Common myeloid progenitor, CD34-positive (primary cell): ENCODE measurements at regions of chr16 and their contacts with region 1.

Region 1: DNA sequence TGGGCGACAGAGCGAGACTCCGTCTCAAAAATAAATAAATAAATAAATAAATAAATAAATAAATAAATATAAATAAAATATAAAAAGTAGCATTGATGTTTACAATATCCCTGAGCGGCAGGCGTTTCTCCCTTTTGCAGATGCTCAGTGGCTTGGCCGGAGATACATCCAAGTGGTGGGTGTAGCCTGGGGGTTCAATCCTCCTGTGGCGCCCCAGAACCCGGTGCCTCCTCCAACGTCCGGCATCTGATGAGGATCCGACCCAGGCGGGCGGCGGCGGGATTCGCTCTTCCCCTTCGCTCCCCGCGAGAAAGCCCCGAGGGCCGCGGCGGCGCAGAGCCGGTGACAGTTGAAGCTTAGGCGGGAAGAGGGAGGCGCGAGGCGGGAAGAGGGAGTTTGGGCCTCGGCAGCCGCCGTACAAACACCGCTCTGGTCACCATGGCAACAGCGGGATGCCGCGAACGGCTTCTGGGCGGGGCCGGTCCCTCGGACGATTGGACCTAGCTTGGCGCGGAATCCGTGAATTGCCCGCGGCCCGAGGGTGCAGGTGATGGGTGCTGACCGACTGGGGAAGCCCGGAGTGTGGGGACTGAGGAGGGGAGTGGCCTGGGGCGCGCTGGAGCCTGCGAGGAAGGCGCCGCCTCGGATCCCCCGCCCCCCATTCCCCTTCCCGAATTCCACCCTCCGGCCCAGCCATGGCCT is 12.7 kb upstream of the ALDOA start:
- DNase-seq: peak; percentile 85 to 88 (median 86)
- H3K4me3 ChIP-seq: peak overlapping the region; percentile 62 to 88 (median 83)
- H3K27ac ChIP-seq: peak overlapping the region in 1 of 2 experiments; percentile 80
- H3K4me1 ChIP-seq: peaks cover 0 to 22% (median 12%) of the 10 kb centered on the region in 4 experiments
- H3K27me3 ChIP-seq: no peaks in the 10 kb centered on the region

Region 2: GRCh38 chr16:29915590-29916247 is 137.1 kb before region 1 on chr16:
- CTCF ChIA-PET with region 1: no interaction called
- POLR2A ChIA-PET with region 1: no interaction called
- DNase-seq: no peak
- H3K4me3 ChIP-seq: no peak overlapping the region
- H3K27ac ChIP-seq: no peak overlapping the region
- H3K4me1 ChIP-seq: no peaks in the 10 kb centered on the region
- H3K27me3 ChIP-seq: no peaks in the 10 kb centered on the region

Region 3: DNA sequence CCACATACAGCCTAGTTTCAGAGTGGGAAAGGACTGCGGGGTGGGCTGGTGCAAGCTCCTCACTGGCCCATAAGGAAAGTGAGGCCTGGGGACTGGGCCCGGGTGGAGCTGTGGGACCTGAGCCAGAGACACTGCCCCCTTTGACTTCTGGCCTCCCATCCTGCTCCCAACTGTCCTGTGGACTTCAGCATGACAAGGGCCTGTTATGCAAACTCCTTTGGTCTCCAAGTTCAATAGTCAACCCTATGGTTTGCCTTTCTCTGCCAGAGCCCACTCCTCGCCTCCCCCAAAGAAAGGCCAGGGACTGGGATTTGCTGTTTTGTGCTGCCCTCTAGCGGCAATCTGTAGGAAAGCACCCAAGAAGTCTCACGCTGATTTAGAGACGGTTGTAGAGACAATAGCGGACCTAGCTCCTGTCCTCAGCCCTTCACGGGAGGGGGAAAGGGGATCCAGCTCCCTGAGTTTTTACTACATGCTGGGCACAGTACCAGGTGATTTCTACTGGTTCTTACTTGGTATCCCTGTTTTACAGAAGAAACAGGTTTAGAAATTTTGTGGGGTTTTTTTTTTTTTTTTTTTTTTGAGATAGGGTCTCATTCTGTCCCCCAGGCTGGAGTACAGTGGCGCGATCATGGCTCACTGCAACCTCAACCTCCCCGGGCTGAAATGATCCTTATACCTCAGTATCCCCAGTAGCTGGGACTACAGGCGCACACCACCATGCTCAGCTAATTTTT is 20.6 kb before region 1 on chr16:
- CTCF ChIA-PET with region 1: interaction called, 16 read pairs
- POLR2A ChIA-PET with region 1: no interaction called
- DNase-seq: peak; percentile 72 to 85 (median 79)
- H3K4me3 ChIP-seq: no peak overlapping the region
- H3K27ac ChIP-seq: no peak overlapping the region
- H3K4me1 ChIP-seq: peaks cover 0 to 12% (median 8%) of the 10 kb centered on the region in 4 experiments
- H3K27me3 ChIP-seq: peaks cover 0 to 52% (median 22%) of the 10 kb centered on the region in 5 experiments

Region 4: DNA sequence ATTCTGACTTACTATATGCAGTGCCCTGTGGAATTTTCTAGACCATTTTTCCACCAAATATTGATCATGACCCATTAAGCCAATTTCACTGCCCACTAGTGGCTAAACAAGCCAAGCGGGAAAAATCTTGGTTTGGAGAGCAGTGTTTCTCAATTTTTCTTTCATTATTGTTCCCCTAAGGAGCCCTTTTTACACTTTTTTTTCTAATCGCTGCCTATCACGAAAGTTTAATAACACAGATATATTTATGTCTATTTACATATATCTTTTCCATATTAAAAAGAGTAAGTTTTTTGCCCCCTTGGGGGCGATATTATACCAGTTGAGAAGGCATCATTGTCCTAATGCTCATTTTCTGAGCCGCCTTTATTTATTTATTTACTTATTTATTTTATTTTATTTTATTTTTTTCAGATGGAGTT is 11.0 kb before region 1 on chr16:
- CTCF ChIA-PET with region 1: interaction called, 76 read pairs
- POLR2A ChIA-PET with region 1: no interaction called
- DNase-seq: peak; percentile 57 to 75 (median 70)
- H3K4me3 ChIP-seq: no peak overlapping the region
- H3K27ac ChIP-seq: no peak overlapping the region
- H3K4me1 ChIP-seq: peaks cover 0 to 5% (median 3%) of the 10 kb centered on the region in 4 experiments
- H3K27me3 ChIP-seq: no peaks in the 10 kb centered on the region

Region 5: GRCh38 chr16:30065143-30065850 is 12.5 kb after region 1 on chr16 and contains the start of gene ALDOA:
- CTCF ChIA-PET with region 1: interaction called, 25 read pairs
- POLR2A ChIA-PET with region 1: interaction called, 11 read pairs
- DNase-seq: peak; percentile 98 to 99 (median 99)
- H3K4me3 ChIP-seq: peak within 1 kb of the TSS; percentile 82 to 99 (median 93)
- H3K27ac ChIP-seq: peak within 1 kb of the TSS; percentile 82 to 91
- H3K4me1 ChIP-seq: peaks cover 0 to 38% (median 35%) of the 10 kb centered on the region in 4 experiments
- H3K27me3 ChIP-seq: no peaks in the 10 kb centered on the region